Left cardiac atrium (tissue), 4 donors: ENCODE measurements at regions of chr17 and their contacts with region 1.

Region 1: DNA sequence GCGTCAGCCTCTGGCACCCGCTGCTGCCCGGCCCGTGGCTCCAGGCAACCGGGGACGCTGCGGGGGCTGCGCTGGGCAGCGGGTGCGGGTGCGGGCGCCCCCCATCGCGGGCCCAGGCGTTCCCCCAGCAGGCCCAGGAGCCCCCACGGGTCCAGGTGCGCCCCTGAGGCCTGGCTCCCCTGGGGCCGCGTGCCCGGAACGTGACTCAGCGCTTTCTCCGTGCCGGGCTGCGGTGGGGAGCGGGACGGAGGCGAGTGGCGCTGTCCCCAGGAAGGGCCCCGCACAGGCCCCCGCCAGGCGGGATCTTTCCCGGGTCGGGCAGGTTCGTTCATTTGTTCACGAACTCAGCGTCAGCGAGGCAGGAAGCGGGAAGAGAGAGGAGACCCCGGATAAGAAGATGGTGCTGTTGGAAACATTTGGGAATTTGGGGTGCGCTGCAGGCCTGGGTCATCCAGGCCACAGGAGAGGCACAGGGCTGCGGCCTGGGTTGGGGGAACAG is 18.4 kb upstream of the EXOC7 start:
- DNase-seq: no peak
- ATAC-seq: peak; percentile 63 to 66

Region 2: GRCh38 chr17:76278952-76279741 is 157.2 kb after region 1 on chr17:
- intact Hi-C with region 1: loop called (anchors 1 to 5 kb)
- DNase-seq: peak; percentile 90
- ATAC-seq: peak; percentile 87 to 88

Region 3: GRCh38 chr17:76296186-76296585 is 174.2 kb after region 1 on chr17:
- intact Hi-C with region 1: loop called in 1 of 2 experiments (anchors 5 kb)
- DNase-seq: no peak
- ATAC-seq: peak; percentile 52 to 66